ENCODE measurements at regions of chr6 and their contacts with region 1.

Region 1: DNA sequence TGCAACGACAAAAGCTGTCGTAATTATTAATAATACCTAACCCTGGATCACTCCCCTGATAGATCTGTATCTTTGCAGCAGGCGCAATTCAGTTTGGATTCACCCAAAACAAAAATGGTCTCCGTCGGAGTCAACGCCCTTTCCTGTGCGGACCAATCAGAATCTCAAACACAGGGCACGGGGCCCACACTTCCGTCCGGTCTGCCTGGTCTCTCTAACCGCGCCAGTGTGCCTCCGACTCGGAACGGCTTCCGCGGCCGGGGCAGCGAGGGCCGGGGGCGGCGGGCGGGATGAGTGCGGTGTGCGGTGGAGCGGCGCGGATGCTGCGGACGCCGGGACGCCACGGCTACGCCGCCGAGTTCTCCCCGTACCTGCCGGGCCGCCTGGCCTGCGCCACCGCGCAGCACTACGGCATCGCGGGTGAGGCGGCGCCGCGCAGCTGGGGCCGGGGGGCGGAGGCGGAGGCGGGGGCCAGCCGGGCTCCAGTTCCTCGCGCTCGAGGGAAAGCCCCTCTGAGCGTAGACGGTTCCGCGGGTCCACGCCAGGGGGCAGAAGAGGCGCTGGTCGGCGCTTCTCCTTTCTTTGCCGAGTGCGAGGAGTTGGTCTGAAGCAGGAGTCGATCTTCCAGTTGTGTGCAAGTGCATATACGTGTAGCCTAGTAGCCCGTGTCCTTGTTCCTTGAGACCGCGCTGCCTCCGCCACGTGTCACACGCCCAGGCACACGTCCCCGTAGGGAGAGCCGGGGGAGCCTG is at the start of gene PEX7:
- DNase-seq: peak; percentile 86
- ATAC-seq: peak; percentile 91
- H3K4me3 Mint-ChIP-seq: peak within 1 kb of the TSS; percentile 94
- H3K27ac Mint-ChIP-seq: peak within 1 kb of the TSS; percentile 98
- H3K4me1 Mint-ChIP-seq: peaks cover 16% of the 10 kb centered on the region
- H3K27me3 Mint-ChIP-seq: peaks cover 4% of the 10 kb centered on the region
- CTCF ChIP-seq: no peak
- total RNA-seq, gene PEX7: 5.0 and 6.8 TPM in 2 replicates

Region 2: GRCh38 chr6:136607932-136608772 is 214.4 kb before region 1 on chr6:
- CTCF ChIA-PET with region 1: no interaction called
- POLR2A ChIA-PET with region 1: no interaction called
- intact Hi-C with region 1: loop called (anchors 1 kb)
- DNase-seq: peak; percentile 53
- ATAC-seq: peak; percentile 99
- H3K4me3 Mint-ChIP-seq: no peak overlapping the region
- H3K27ac Mint-ChIP-seq: no peak overlapping the region
- H3K4me1 Mint-ChIP-seq: peaks cover 3% of the 10 kb centered on the region
- H3K27me3 Mint-ChIP-seq: no peaks in the 10 kb centered on the region
- CTCF ChIP-seq: peak; percentile 63

Region 3: DNA sequence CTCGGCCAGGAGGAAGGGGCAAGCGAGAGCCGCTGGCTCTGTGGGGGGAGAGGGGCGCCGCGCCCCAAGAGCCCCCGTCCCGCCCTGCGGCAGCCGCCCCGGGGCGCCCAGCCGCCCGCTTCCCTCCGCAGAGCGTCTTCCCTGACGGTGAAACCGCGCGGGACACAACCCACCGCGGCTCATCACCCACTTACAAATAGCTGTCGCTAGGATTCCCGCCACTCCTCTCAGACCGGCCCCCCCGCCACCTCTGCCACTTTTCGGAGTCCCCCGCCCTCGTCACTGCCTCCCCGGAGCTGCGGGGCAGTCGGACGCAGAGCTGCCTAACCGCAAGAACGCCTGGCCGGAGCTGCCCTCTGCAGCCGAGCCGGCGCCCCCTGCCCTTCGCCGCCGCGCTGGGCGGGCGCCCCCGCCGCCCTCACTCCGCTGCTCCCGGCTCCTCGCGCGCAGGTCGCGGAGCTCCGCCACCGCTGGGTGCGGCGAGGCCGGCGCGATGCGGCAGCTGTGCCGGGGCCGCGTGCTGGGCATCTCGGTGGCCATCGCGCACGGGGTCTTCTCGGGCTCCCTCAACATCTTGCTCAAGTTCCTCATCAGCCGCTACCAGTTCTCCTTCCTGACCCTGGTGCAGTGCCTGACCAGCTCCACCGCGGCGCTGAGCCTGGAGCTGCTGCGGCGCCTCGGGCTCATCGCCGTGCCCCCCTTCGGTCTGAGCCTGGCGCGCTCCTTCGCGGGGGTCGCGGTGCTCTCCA is 99.6 kb after region 1 on chr6 and contains the start of gene SLC35D3:
- CTCF ChIA-PET with region 1: no interaction called
- POLR2A ChIA-PET with region 1: no interaction called
- intact Hi-C with region 1: loop called (anchors 2 kb)
- DNase-seq: peak; percentile 36
- ATAC-seq: peak; percentile 52
- H3K4me3 Mint-ChIP-seq: peak within 1 kb of the TSS; percentile 83
- H3K27ac Mint-ChIP-seq: no peak within 1 kb of the TSS
- H3K4me1 Mint-ChIP-seq: peaks cover 29% of the 10 kb centered on the region
- H3K27me3 Mint-ChIP-seq: peaks cover 45% of the 10 kb centered on the region
- CTCF ChIP-seq: no peak
- total RNA-seq, gene SLC35D3: not detected in 2 replicates

Region 4: GRCh38 chr6:137866914-137867684 is 1044.5 kb after region 1 on chr6 and contains the start of gene TNFAIP3:
- CTCF ChIA-PET with region 1: no interaction called
- POLR2A ChIA-PET with region 1: no interaction called
- intact Hi-C with region 1: no loop called
- DNase-seq: peak; percentile 97
- ATAC-seq: peak; percentile 78
- H3K4me3 Mint-ChIP-seq: peak within 1 kb of the TSS; percentile 96
- H3K27ac Mint-ChIP-seq: peak within 1 kb of the TSS; percentile 98
- H3K4me1 Mint-ChIP-seq: peaks cover 54% of the 10 kb centered on the region
- H3K27me3 Mint-ChIP-seq: no peaks in the 10 kb centered on the region
- CTCF ChIP-seq: no peak
- total RNA-seq, gene TNFAIP3: 207 and 226 TPM in 2 replicates